ENCODE measurements at regions of chr4 and their contacts with region 1.

Region 1: DNA sequence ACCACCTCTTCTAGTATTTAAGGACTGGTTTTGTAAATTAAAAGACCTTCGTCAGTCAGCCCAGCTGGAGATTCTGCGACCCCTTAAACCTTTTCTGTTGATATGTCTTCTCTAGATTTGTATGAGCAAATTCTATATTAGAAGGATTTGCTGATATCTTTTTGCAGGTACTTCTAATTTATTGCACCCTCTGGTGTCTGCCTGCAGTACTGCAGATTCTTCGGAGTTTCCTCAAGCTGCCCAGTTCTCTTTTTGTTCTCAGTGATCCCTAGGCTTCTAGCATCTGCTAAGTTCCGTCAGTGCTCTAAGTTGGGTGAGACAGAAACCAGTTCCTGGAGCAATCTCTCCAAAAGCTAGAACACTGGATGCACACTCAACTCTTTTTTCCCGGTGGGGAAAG is 545.2 kb downstream of the C4orf33 start:
- DNase-seq: peak in 4 of 5 donors; percentile 23 to 51 (median 36)
- ATAC-seq: peak in 1 of 4 donors; percentile 46
- H3K4me3 ChIP-seq: no peak overlapping the region
- H3K27ac ChIP-seq: no peak overlapping the region
- H3K4me1 ChIP-seq: no peaks in the 10 kb centered on the region
- H3K27me3 ChIP-seq: peaks cover 0 to 2% (median 0%) of the 10 kb centered on the region in 9 donors
- CTCF ChIP-seq: peak; percentile 69 to 87 (median 81)
- POLR2A ChIP-seq: no peak

Region 2: GRCh38 chr4:129218360-129218759 is 422.8 kb before region 1 on chr4:
- intact Hi-C with region 1: loop called in 5 of 10 experiments (anchors 5 to 10 kb)
- DNase-seq: peak in 2 of 5 donors; percentile 11 to 22
- ATAC-seq: peak in 3 of 4 donors; percentile 65 to 81 (median 71)
- H3K4me3 ChIP-seq: no peak overlapping the region
- H3K27ac ChIP-seq: no peak overlapping the region
- H3K4me1 ChIP-seq: peaks cover 0 to 2% (median 0%) of the 10 kb centered on the region in 12 donors
- H3K27me3 ChIP-seq: no peaks in the 10 kb centered on the region
- CTCF ChIP-seq: peak in 9 of 12 donors; percentile 10 to 49 (median 34)
- POLR2A ChIP-seq: no peak

Region 3: DNA sequence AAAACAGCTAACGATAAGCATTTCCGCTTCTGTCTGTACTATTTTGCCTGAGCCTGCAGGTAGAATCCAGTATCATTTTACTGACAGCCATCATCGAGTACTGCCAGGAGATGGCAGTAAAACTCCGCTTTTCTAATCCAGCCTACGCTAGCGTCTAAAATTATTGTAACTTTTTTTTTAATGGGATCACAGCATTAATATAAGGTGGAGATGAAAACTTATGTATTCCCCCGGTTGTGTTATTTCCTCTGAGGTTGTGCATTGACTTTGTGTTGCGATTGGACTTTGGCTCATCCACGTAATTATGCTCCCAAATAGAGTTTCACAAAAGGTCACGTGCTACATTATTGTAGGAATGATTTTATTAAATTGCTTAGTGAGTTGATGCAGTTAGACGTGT is 297.1 kb before region 1 on chr4:
- intact Hi-C with region 1: loop called in 1 of 10 experiments (anchors 5 kb)
- DNase-seq: no peak
- ATAC-seq: peak in 2 of 4 donors; percentile 50 to 71
- H3K4me3 ChIP-seq: no peak overlapping the region
- H3K27ac ChIP-seq: no peak overlapping the region
- H3K4me1 ChIP-seq: peaks cover 0 to 23% (median 0%) of the 10 kb centered on the region in 12 donors
- H3K27me3 ChIP-seq: peaks cover 0 to 5% (median 0%) of the 10 kb centered on the region in 9 donors
- CTCF ChIP-seq: peak; percentile 42 to 67 (median 54)
- POLR2A ChIP-seq: no peak

Region 4: DNA sequence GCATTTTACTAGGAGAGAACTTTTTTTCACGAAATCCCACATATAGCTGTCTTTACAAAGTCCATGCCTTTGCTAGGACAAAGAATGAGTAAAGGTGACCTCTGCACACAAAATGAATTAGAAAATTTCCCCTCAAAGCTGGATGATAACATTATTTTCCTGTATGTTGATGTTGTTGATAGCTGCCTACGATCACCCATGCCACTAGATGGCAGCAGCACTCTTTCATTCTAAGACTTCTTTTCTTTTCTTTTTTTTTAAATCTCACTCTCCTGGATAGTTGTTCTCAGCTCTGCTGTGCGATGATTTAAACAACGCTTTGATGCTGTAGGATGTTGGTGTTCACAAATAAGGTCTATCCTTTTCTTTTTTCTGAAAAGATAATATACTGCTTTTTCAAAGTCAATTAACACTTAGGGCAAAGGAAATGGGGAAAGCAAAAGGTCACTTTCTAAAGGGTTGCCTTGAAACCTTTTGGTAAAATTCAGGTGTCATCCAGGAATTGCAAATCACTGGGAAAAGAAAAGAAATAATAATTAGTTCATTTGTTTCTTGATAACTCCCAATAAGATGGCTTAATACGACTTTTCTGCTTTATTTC is 278.4 kb before region 1 on chr4:
- intact Hi-C with region 1: loop called (anchors 1 to 5 kb)
- DNase-seq: peak in 4 of 5 donors; percentile 27 to 46 (median 32)
- ATAC-seq: peak in 3 of 4 donors; percentile 50 to 76 (median 52)
- H3K4me3 ChIP-seq: no peak overlapping the region
- H3K27ac ChIP-seq: no peak overlapping the region
- H3K4me1 ChIP-seq: peaks cover 0 to 3% (median 0%) of the 10 kb centered on the region in 12 donors
- H3K27me3 ChIP-seq: peaks cover 0 to 7% (median 0%) of the 10 kb centered on the region in 9 donors
- CTCF ChIP-seq: peak; percentile 75 to 89 (median 82)
- POLR2A ChIP-seq: no peak

Region 5: GRCh38 chr4:129526814-129527213 is 114.4 kb before region 1 on chr4:
- intact Hi-C with region 1: loop called in 9 of 10 experiments (anchors 1 to 5 kb)
- DNase-seq: no peak
- ATAC-seq: no peak
- H3K4me3 ChIP-seq: no peak overlapping the region
- H3K27ac ChIP-seq: no peak overlapping the region
- H3K4me1 ChIP-seq: peaks cover 0 to 11% (median 0%) of the 10 kb centered on the region in 12 donors
- H3K27me3 ChIP-seq: no peaks in the 10 kb centered on the region
- CTCF ChIP-seq: peak; percentile 28 to 66 (median 46)
- POLR2A ChIP-seq: no peak

Region 6: DNA sequence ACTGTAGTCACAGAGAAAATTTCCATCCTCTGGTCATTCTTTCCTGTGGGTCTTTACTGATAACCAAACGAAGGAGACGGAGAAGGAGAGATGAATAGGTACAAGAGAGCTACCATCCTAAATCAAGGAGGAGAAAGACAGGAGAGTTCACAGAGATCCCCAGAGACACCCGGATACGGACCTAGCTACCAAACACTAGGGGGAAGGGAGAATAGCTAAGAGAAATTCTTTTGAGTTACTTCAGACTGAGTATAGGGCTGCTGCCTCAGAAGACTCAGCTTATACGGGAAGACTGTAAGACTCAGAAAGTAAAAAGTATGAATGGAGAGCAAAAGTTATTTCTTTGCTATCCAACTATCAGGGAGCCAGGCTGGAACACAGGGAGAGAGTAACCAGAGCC is 26.9 kb after region 1 on chr4:
- intact Hi-C with region 1: no loop called
- DNase-seq: no peak
- ATAC-seq: no peak
- H3K4me3 ChIP-seq: no peak overlapping the region
- H3K27ac ChIP-seq: no peak overlapping the region
- H3K4me1 ChIP-seq: no peaks in the 10 kb centered on the region
- H3K27me3 ChIP-seq: no peaks in the 10 kb centered on the region
- CTCF ChIP-seq: no peak
- POLR2A ChIP-seq: no peak

Measured in heart left ventricle (tissue), 16 donors.